ENCODE measurements at regions of chr3 and their contacts with region 1.

Region 1: GRCh38 chr3:189841473-189842210 is 210.5 kb downstream of the TP63 start:
- DNase-seq: no peak
- ATAC-seq: no peak
- H3K4me3 ChIP-seq: no peak overlapping the region
- H3K27ac ChIP-seq: peak overlapping the region; percentile 64 to 87 (median 76)
- H3K4me1 ChIP-seq: peaks cover 20% of the 10 kb centered on the region in 2 donors
- H3K27me3 ChIP-seq: no peaks in the 10 kb centered on the region
- CTCF ChIP-seq: no peak
- POLR2A ChIP-seq: no peak

Region 2: GRCh38 chr3:189355481-189356201 is 486.0 kb before region 1 on chr3:
- in situ Hi-C with region 1: no loop called
- intact Hi-C with region 1: loop called (anchors 10 kb)
- DNase-seq: peak; percentile 33 to 46
- ATAC-seq: peak; percentile 96
- H3K4me3 ChIP-seq: peak overlapping the region in 1 of 4 donors; percentile 29
- H3K27ac ChIP-seq: peak overlapping the region; percentile 72 to 81 (median 80)
- H3K4me1 ChIP-seq: peaks cover 19 to 38% of the 10 kb centered on the region in 2 donors
- H3K27me3 ChIP-seq: no peaks in the 10 kb centered on the region
- CTCF ChIP-seq: no peak
- POLR2A ChIP-seq: no peak

Region 3: GRCh38 chr3:189685854-189686253 is 155.8 kb before region 1 on chr3:
- in situ Hi-C with region 1: no loop called
- intact Hi-C with region 1: loop called (anchors 5 kb)
- DNase-seq: no peak
- ATAC-seq: no peak
- H3K4me3 ChIP-seq: no peak overlapping the region
- H3K27ac ChIP-seq: no peak overlapping the region
- H3K4me1 ChIP-seq: peaks cover 14 to 36% of the 10 kb centered on the region in 2 donors
- H3K27me3 ChIP-seq: no peaks in the 10 kb centered on the region
- CTCF ChIP-seq: no peak
- POLR2A ChIP-seq: no peak

Region 4: DNA sequence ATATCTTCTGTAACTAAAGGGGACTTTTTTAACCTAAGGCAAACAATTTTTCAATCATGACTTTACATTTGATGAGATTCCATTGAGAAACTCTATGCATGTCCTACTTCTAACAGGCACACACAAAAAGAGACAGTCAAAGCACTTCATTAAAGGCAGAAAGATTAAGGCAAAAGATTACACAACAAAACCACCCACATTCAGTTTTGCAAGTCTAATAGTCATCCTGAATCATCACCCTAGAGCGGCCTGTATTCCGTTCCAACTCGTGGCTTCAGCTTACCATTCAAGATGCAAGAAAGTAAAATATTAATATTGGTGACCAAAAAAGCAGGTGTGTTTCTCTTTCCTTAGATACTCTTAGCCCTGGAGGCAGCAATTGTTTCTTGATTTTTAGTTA is 73.2 kb after region 1 on chr3:
- in situ Hi-C with region 1: no loop called
- intact Hi-C with region 1: no loop called
- DNase-seq: no peak
- ATAC-seq: peak; percentile 58 to 80
- H3K4me3 ChIP-seq: no peak overlapping the region
- H3K27ac ChIP-seq: no peak overlapping the region
- H3K4me1 ChIP-seq: no peaks in the 10 kb centered on the region
- H3K27me3 ChIP-seq: no peaks in the 10 kb centered on the region
- CTCF ChIP-seq: no peak
- POLR2A ChIP-seq: no peak

Region 5: DNA sequence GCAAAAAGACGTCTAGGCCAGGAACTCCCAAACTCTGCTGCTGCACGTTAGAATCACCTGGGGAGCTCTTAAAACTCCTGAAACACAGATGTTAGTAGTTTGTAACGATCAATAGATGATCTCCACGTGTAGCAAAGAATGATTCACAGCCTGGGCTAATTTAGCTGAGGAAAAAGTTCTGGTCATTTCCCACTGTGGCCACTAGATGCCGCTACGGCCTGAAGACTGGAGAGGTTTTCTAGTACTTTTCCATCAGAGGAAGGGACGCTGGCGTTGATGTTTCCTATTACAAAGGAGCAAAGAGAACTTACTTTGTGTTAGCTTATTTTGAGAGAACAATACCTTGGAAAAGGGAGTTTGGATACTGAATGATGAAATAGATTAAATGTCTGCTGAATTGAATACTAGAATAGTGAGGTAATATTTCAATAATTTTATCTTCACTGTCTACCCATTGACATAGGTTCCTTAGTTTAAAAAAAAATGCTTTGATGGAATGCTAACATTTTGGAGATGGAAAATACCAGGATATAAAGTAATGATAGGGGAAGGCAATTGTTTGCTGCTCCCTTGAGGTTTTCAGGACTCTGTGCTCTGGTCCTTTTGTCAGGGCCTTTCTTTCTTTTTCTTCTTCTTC is 120.0 kb after region 1 on chr3:
- in situ Hi-C with region 1: no loop called
- intact Hi-C with region 1: no loop called
- DNase-seq: peak; percentile 20 to 60
- ATAC-seq: peak; percentile 85 to 92
- H3K4me3 ChIP-seq: no peak overlapping the region
- H3K27ac ChIP-seq: no peak overlapping the region
- H3K4me1 ChIP-seq: peaks cover 0 to 6% of the 10 kb centered on the region in 2 donors
- H3K27me3 ChIP-seq: no peaks in the 10 kb centered on the region
- CTCF ChIP-seq: peak; percentile 60 to 91 (median 80)
- POLR2A ChIP-seq: no peak